ENCODE measurements at regions of chr16 and their contacts with region 1.

Region 1: DNA sequence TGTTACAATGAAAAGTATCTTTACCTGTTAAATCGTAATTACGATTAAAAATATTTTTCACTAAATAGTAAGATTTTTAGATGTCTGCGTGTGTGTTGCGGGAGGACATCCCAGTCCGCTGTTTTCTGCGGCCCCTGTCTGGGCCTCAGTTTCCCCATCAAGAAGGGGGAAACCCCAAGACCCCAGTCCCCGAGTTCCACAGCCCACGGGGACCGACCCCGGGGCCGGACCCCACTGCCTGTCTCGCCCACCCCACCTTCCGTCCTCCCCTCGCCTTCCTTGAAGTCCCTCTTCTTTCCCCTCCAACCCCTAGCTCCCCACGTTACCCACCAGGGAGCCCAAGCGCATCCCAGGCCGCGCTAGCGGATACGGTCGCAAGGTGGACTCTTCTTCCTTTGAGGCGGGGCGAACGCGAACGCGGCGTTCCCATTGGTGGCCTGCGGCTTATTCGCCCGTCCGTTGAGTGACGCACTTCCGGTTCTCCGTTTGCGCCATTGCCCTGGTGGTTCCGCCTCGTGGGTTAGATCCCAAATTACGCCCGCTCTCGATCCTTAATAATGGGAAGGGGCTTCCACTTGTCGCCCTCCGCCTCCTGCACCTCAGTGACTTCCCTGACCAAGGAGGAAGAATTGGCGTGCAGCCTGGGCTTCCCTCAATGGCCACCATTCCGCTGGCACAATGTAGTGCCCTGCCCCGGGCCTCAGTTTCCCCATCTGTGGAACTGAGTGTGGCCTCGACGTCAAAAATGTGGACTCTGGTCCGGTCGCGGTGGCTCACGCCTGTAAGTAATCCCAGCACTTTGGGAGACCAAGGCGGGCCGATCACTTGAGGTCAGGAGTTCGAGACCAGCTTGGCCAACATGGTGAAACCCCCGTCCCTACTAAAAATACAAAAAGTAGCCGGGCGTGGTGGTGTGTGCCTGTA is at the start of gene NSMCE1:
- DNase-seq: peak; percentile 97
- H3K4me3 Mint-ChIP-seq: peak within 1 kb of the TSS; percentile 98
- H3K27ac Mint-ChIP-seq: peak within 1 kb of the TSS; percentile 90
- H3K4me1 Mint-ChIP-seq: peaks cover 65% of the 10 kb centered on the region
- H3K27me3 Mint-ChIP-seq: no peaks in the 10 kb centered on the region
- total RNA-seq, gene NSMCE1: 100 to 106 TPM

Region 2: GRCh38 chr16:27203429-27204231 is 65.0 kb before region 1 on chr16 and contains the start of gene KDM8:
- CTCF ChIA-PET with region 1: no interaction called
- POLR2A ChIA-PET with region 1: interaction called, 12 read pairs
- DNase-seq: peak; percentile 100
- H3K4me3 Mint-ChIP-seq: peak within 1 kb of the TSS; percentile 95
- H3K27ac Mint-ChIP-seq: peak within 1 kb of the TSS; percentile 99
- H3K4me1 Mint-ChIP-seq: peaks cover 56% of the 10 kb centered on the region
- H3K27me3 Mint-ChIP-seq: no peaks in the 10 kb centered on the region
- total RNA-seq, gene KDM8: 12.7 to 14.3 TPM

Region 3: DNA sequence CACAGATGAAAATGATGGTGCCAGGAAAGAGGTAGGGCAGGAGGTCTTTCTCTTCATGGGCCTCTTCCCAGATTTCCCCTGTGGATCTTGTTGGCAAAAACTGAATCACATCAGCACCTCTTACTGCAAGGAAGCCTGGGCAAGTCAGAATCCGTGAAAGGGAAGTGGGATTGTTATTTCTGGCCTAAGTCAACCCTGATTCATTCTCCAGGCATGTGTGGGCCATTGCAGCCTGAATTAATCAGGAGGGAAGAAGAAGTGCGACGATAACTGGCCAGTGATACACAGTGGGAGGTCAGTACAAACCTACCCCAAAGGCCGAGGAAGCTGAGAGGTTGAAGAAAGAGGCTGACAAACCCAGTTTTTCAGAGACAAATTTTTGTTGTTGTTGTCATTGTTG is 17.8 kb after region 1 on chr16:
- CTCF ChIA-PET with region 1: interaction called, 4 read pairs
- POLR2A ChIA-PET with region 1: interaction called, 32 read pairs
- DNase-seq: no peak
- H3K4me3 Mint-ChIP-seq: no peak overlapping the region
- H3K27ac Mint-ChIP-seq: no peak overlapping the region
- H3K4me1 Mint-ChIP-seq: peaks cover 66% of the 10 kb centered on the region
- H3K27me3 Mint-ChIP-seq: peaks cover 20% of the 10 kb centered on the region

Measured in activated CD4-positive, alpha-beta memory T cell treated with anti-CD3 and anti-CD28 coated beads, Interleukin-2, amount 10 ng/mL, durations not matched to agents 7 days and 5 days (primary cell).